ENCODE measurements at regions of chr15 and their contacts with region 1.

Region 1: DNA sequence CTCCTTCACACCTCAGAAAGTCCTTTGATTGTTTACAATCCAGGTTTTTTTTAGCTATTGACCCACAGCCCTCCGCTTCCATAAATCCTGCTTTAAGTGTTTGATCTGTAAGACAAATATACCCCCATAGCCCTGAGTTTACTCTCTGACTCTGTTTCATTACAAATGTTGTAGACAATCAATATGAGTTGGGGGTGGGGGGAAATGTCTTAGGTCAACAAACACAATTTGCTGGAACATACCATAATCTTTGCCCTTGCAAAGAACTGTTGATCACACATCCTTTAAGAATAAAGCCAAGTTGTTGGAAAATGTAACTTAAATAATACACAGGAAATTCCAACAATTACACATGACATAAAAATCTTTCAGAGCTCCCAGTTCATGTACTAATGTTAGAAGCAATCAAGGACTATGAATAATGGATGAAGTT is 301.8 kb upstream of the SEMA6D start:
- DNase-seq: peak; percentile 91
- H3K4me3 ChIP-seq: no peak overlapping the region
- H3K27ac ChIP-seq: peak overlapping the region; percentile 97
- H3K4me1 ChIP-seq: peaks cover 40% of the 10 kb centered on the region
- H3K27me3 ChIP-seq: no peaks in the 10 kb centered on the region
- CTCF ChIP-seq: no peak
- POLR2A ChIP-seq: no peak

Region 2: GRCh38 chr15:47673232-47674080 is 257.9 kb after region 1 on chr15:
- CTCF ChIA-PET with region 1: no interaction called
- POLR2A ChIA-PET with region 1: no interaction called
- dilution Hi-C with region 1: no loop called
- intact Hi-C with region 1: loop called (anchors 5 kb)
- DNase-seq: peak; percentile 90
- H3K4me3 ChIP-seq: no peak overlapping the region
- H3K27ac ChIP-seq: peak overlapping the region; percentile 44
- H3K4me1 ChIP-seq: peaks cover 15% of the 10 kb centered on the region
- H3K27me3 ChIP-seq: no peaks in the 10 kb centered on the region
- CTCF ChIP-seq: no peak
- POLR2A ChIP-seq: peak; percentile 37

Measured in endothelial cell of umbilical vein (primary cell).